AG04449 (cell line): ENCODE measurements at regions of chr3 and their contacts with region 1.

Region 1: GRCh38 chr3:62201438-62202035 is 171.8 kb downstream of the FEZF2 start:
- DNase-seq: no peak
- H3K4me3 ChIP-seq: no peak overlapping the region
- CTCF ChIP-seq: peak; percentile 43

Region 2: DNA sequence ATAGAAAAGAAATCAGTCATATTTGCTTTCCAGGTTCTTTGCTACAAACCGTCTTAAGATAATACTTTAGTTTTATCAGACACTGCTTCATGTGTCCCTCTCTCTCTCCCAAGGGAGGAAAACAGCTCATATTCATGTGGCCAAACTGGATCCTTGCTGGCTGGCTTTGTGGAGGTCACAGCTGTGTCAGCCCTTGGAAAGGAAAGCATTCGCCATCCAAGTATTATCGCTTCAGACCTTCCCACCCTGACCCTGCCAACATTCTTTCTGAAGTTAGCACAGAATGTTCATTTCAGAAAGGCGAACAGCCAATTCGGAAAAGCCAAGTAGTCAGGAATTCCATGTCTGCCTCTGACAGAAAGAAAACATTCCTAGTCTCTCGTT is 41.8 kb before region 1 on chr3:
- CTCF ChIA-PET with region 1: no interaction called
- POLR2A ChIA-PET with region 1: no interaction called
- DNase-seq: no peak
- H3K4me3 ChIP-seq: no peak overlapping the region
- CTCF ChIP-seq: no peak

Region 3: GRCh38 chr3:62188681-62189383 is 12.7 kb before region 1 on chr3:
- CTCF ChIA-PET with region 1: interaction called, 51 read pairs
- POLR2A ChIA-PET with region 1: no interaction called
- DNase-seq: peak; percentile 23
- H3K4me3 ChIP-seq: peak overlapping the region; percentile 21; the same call in 1 of the 2 replicates
- CTCF ChIP-seq: peak; percentile 76

Region 4: GRCh38 chr3:62211675-62212429 is 10.3 kb after region 1 on chr3:
- CTCF ChIA-PET with region 1: interaction called, 21 read pairs
- POLR2A ChIA-PET with region 1: no interaction called
- DNase-seq: no peak
- H3K4me3 ChIP-seq: no peak overlapping the region
- CTCF ChIP-seq: no peak

Region 5: DNA sequence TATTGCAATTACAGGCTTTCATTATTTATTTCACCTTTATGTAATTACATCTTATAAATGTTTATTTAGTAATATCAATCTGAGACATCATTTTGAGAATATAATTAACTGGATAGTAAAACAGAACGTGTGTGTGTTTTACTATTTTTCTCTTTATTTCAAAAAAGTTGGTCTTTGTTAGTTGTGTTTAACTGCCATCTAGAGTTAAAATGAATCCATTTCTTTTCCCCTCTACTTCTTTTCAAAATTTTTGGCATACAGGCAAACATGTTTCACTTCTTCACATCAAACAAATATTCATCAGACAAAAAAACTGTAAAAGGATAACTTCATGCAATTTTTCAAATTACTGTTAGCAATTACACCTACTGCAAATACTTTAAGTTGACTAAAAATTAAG is 110.7 kb after region 1 on chr3:
- CTCF ChIA-PET with region 1: interaction called, 30 read pairs
- POLR2A ChIA-PET with region 1: no interaction called
- DNase-seq: no peak
- H3K4me3 ChIP-seq: no peak overlapping the region
- CTCF ChIP-seq: no peak

Region 6: DNA sequence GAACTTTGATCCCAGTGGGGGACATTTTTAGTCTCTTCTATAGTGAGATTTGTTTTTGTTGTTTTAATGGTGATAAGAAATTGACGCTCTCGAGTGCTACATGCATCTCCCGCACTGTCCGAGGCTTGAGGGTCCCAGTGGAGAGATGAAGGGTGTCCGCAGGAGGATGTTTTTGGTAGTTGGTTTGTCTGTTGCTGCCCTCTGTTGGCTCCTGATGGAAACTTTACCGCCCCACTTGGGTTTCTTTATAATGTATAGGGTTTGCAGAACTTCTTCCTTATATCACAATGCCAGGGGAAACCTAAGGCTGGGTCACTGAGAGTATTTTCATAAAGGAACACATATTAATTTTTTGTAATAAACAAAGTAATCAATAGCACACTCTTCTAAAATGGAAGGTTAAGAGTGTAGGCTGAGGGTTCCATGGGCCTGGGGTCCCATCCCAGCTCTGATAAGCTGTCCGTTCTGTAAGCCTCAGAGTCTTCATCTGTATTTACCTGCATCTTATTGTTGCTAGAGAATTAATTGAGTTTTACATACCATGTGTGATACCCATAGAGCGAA is 357.1 kb after region 1 on chr3:
- CTCF ChIA-PET with region 1: interaction called, 47 read pairs
- POLR2A ChIA-PET with region 1: no interaction called
- DNase-seq: no peak
- H3K4me3 ChIP-seq: no peak overlapping the region
- CTCF ChIP-seq: peak; percentile 39